ENCODE measurements at regions of chr5 and their contacts with region 1.

Region 1: GRCh38 chr5:95760273-95761191 is 29.4 kb downstream of the RHOBTB3 start:
- DNase-seq: no peak
- H3K4me3 Mint-ChIP-seq: peak overlapping the region; percentile 51
- H3K27ac Mint-ChIP-seq: peak overlapping the region; percentile 58
- H3K4me1 Mint-ChIP-seq: peaks cover 28% of the 10 kb centered on the region
- H3K27me3 Mint-ChIP-seq: peaks cover 58% of the 10 kb centered on the region

Region 2: GRCh38 chr5:95591490-95591901 is 169.0 kb before region 1 on chr5:
- intact Hi-C with region 1: loop called (anchors 2 kb)
- DNase-seq: no peak
- H3K4me3 Mint-ChIP-seq: no peak overlapping the region
- H3K27ac Mint-ChIP-seq: peak overlapping the region; percentile 65
- H3K4me1 Mint-ChIP-seq: peaks cover 30% of the 10 kb centered on the region
- H3K27me3 Mint-ChIP-seq: no peaks in the 10 kb centered on the region

Region 3: DNA sequence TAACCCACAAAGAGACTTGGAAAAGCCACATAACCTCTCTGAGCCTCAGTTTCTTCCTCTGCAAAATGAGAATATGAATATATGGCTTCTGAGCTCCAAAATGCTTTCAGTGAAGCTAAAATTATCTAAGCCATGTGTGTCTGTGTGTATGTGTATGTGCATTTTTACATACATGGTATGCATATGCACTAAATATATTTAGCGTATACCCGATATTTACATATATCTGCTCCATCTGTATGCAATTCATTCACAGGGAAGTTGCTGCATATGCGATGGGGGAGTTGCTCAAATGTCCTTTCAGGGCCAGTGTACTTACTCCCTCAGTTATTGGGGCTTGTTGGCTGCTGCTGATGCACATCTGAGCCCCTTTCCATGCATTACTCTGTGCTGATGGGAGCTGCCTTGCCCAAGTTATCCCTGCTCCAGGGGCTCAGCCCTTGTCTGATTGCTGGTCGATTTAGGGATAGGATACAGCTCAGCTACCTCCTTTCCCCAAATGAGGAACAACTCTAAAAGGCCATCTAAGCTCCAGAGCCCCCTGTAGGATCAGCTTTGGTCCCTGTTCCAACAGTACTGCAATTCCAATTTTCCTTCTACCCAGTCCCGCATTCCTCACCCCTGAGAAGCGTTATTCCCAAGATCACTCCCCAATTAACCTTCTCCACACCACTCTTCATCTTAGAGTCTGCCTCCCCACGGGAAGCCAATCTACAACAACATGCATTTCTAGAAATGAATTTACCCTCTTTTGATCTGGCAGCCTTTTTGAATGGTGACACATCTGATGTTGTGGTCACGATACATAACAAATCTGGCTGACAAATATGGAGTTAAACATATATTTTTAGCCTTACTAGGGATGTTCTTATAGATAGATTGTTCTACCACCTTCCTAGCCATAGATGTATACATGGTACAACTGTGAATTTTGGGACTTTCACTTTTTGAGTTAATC is 13.5 kb before region 1 on chr5:
- intact Hi-C with region 1: loop called (anchors 1 kb)
- DNase-seq: no peak
- H3K4me3 Mint-ChIP-seq: no peak overlapping the region
- H3K27ac Mint-ChIP-seq: no peak overlapping the region
- H3K4me1 Mint-ChIP-seq: peaks cover 12% of the 10 kb centered on the region
- H3K27me3 Mint-ChIP-seq: peaks cover 26% of the 10 kb centered on the region